ENCODE measurements at regions of chr5 and their contacts with region 1.

Region 1: DNA sequence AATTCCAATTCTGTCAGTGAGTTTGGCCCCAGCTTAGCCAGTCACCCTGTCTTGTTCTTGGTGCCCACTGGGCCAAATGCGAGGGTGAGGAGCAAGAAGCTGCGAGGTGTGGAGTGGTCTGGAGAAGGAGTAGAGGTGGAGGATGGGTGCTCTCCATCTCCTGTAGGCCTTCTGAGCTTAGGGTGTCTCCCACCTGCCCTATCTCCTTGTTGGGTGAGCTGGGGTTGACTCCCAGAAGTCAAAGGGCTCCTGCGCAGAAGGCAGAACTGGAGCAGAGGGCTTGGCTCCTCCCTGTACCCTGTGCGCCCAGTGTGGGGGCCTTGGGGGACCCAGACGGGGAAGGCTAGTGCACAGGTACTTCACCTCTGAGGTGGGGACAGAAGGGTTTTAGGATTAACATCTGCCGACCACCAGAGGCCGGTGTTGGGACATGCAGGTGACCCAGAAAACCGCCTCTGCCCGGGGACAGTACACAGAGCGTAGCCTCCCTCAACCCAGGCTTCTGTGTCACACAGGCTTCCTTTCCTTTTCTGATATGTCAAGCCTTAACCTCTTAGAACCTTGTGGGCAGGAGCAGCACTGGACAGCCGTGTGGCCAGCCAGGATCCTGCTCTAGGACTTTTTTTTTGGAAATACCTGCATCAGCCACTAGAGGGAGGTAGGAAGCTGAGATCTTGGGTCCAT is 16.9 kb downstream of the IL5 start:
- DNase-seq: peak; percentile 70
- H3K4me3 ChIP-seq: peak overlapping the region; percentile 12 to 43; a peak in 2 of 4 replicates
- H3K27ac ChIP-seq: no peak overlapping the region
- H3K4me1 ChIP-seq: no peaks in the 10 kb centered on the region; a peak in 1 of 4 replicates
- H3K27me3 ChIP-seq: no peaks in the 10 kb centered on the region
- CTCF ChIP-seq: peak; percentile 94
- EP300 ChIP-seq: no peak
- RAD21 ChIP-seq: peak; percentile 63; the same call in 1 of the 2 replicates

Region 2: GRCh38 chr5:132456296-132457001 is 70.0 kb before region 1 on chr5:
- CTCF ChIA-PET with region 1: no interaction called
- POLR2A ChIA-PET with region 1: no interaction called
- DNase-seq: no peak
- H3K4me3 ChIP-seq: no peak overlapping the region
- H3K27ac ChIP-seq: peak overlapping the region; percentile 56 to 83
- H3K4me1 ChIP-seq: peaks cover 17 to 44% of the 10 kb centered on the region in 2 experiments
- H3K27me3 ChIP-seq: no peaks in the 10 kb centered on the region
- CTCF ChIP-seq: no peak
- EP300 ChIP-seq: no peak
- RAD21 ChIP-seq: no peak

Region 3: DNA sequence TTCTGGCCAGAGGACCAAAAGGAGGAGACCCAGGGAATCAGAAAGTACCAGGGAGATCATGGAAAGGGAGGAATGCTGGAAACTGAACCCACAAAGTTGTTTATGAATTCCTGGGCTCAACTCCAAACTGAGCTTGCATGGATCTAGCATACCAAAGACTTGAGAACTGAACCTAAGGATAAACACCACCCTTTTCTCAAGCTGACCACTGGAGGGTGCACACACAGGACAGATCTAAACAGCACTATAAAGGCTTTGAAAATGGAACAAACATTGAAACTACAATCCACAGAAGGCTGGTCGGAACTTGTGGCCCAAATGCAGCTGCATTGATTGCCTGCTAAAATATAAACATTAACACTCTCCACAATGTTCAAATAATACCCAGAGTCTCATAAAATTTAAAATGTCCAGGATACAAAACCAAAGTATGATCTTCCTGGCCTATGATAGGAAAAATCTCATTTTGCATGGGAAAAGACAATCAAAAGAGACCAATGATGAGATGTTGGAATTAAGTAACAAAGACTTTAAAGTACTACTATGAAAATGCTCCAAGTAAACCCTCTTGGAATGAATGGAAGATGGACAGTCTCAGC is 20.2 kb before region 1 on chr5:
- CTCF ChIA-PET with region 1: interaction called, 22 read pairs
- POLR2A ChIA-PET with region 1: no interaction called
- DNase-seq: peak; percentile 48
- H3K4me3 ChIP-seq: peak overlapping the region in 1 of 2 experiments; percentile 4; a peak in 1 of 4 replicates
- H3K27ac ChIP-seq: peak overlapping the region; percentile 3 to 52; a peak in 3 of 4 replicates
- H3K4me1 ChIP-seq: no peaks in the 10 kb centered on the region; a peak in 1 of 4 replicates
- H3K27me3 ChIP-seq: no peaks in the 10 kb centered on the region
- CTCF ChIP-seq: peak; percentile 69
- EP300 ChIP-seq: no peak
- RAD21 ChIP-seq: peak; percentile 45

Region 4: DNA sequence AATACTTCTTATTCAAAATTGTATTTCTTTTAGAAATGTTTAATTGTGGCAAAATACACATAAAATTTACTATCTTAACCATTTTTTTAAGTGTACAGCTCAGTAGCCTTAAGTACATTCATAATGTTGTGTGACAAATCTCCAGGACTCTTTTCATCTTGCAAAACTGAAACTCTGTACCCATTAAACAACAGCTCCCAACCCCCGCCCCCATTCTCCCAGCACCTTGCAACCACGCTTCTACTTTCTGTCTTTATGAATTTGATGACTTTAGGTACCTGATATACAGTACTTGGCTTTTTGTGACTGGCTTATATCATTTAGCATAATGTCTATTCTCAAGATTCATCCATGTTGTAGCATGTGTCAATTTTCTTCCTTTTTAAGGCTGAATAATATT is 19.7 kb after region 1 on chr5:
- CTCF ChIA-PET with region 1: interaction called, 38 read pairs
- POLR2A ChIA-PET with region 1: no interaction called
- DNase-seq: no peak
- H3K4me3 ChIP-seq: no peak overlapping the region
- H3K27ac ChIP-seq: no peak overlapping the region
- H3K4me1 ChIP-seq: peaks cover 0 to 4% of the 10 kb centered on the region in 2 experiments; a peak in 1 of 4 replicates
- H3K27me3 ChIP-seq: no peaks in the 10 kb centered on the region; the same call in 1 of the 2 replicates
- CTCF ChIP-seq: no peak
- EP300 ChIP-seq: no peak
- RAD21 ChIP-seq: no peak

Region 5: DNA sequence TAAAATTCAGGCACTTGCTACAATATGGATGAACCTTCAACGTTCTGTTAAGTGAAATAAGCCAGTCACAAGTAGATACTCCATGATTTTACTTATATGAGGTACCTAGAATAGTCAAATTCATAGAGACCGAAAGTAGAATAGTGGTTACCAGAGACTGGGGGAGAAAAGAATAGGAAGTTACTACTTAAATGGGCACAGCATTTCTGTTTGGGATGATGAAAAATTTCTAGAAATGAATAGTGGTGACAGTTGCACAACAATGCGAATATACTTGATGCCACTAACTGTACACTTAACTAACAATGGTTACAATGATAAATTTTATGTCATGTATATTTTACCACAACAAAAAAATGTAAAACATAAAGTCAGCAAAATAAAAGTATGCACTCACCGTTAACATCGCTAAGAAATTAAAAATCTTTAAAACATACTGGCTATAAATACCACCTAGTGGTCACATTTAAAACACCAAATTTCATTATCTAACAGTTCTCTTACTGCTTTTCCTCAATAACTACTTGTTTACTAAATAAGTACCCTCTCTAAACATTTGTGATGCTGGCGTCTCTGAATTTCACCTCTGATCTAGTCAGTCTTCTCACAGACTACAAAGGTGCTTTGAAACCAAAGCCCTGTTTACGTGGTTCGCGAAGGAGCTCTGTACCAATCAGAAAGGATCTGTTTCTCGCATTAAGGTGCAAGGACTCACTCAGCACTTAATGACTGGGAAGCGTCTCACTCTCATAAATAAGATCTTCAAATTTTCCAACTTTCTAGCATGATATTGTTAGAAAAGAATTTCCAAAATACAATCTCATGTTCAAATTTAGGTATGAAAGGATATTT is 188.2 kb after region 1 on chr5:
- CTCF ChIA-PET with region 1: interaction called, 20 read pairs
- POLR2A ChIA-PET with region 1: no interaction called
- DNase-seq: no peak
- H3K4me3 ChIP-seq: no peak overlapping the region
- H3K27ac ChIP-seq: no peak overlapping the region
- H3K4me1 ChIP-seq: no peaks in the 10 kb centered on the region
- H3K27me3 ChIP-seq: no peaks in the 10 kb centered on the region
- CTCF ChIP-seq: peak; percentile 69
- EP300 ChIP-seq: no peak
- RAD21 ChIP-seq: peak; percentile 40

Region 6: GRCh38 chr5:132813599-132814502 is 287.4 kb after region 1 on chr5:
- CTCF ChIA-PET with region 1: interaction called, 88 read pairs
- POLR2A ChIA-PET with region 1: no interaction called
- DNase-seq: peak; percentile 86
- H3K4me3 ChIP-seq: peak overlapping the region; percentile 59 to 61; a peak in 3 of 4 replicates
- H3K27ac ChIP-seq: no peak overlapping the region
- H3K4me1 ChIP-seq: peaks cover 0 to 2% of the 10 kb centered on the region in 2 experiments; a peak in 2 of 4 replicates
- H3K27me3 ChIP-seq: no peaks in the 10 kb centered on the region
- CTCF ChIP-seq: no peak
- EP300 ChIP-seq: no peak
- RAD21 ChIP-seq: no peak

Region 7: GRCh38 chr5:132829742-132830435 is 303.5 kb after region 1 on chr5:
- CTCF ChIA-PET with region 1: interaction called, 88 read pairs
- POLR2A ChIA-PET with region 1: no interaction called
- DNase-seq: peak; percentile 97
- H3K4me3 ChIP-seq: peak overlapping the region; percentile 65 to 71
- H3K27ac ChIP-seq: no peak overlapping the region
- H3K4me1 ChIP-seq: peaks cover 0 to 5% of the 10 kb centered on the region in 2 experiments; a peak in 1 of 4 replicates
- H3K27me3 ChIP-seq: no peaks in the 10 kb centered on the region
- CTCF ChIP-seq: peak; percentile 78
- EP300 ChIP-seq: no peak
- RAD21 ChIP-seq: peak; percentile 75

Measured in SK-N-SH (cell line).